ENCODE measurements at regions of chr1 and their contacts with region 1.

Region 1: GRCh38 chr1:24486331-24487065 is 16.1 kb upstream of the RCAN3 start:
- DNase-seq: peak; percentile 8 to 80 (median 55)
- H3K4me3 ChIP-seq: peak overlapping the region; percentile 51
- H3K4me3 Mint-ChIP-seq: peak overlapping the region; percentile 24 to 77 (median 72)
- H3K27ac ChIP-seq: peak overlapping the region; percentile 45
- H3K27ac Mint-ChIP-seq: peak overlapping the region; percentile 58 to 94 (median 80)
- H3K4me1 ChIP-seq: peaks cover 81% of the 10 kb centered on the region
- H3K4me1 Mint-ChIP-seq: peaks cover 50 to 73% (median 65%) of the 10 kb centered on the region in 3 donors
- H3K27me3 ChIP-seq: no peaks in the 10 kb centered on the region
- H3K27me3 Mint-ChIP-seq: peaks cover 0 to 2% of the 10 kb centered on the region in 2 donors

Region 2: DNA sequence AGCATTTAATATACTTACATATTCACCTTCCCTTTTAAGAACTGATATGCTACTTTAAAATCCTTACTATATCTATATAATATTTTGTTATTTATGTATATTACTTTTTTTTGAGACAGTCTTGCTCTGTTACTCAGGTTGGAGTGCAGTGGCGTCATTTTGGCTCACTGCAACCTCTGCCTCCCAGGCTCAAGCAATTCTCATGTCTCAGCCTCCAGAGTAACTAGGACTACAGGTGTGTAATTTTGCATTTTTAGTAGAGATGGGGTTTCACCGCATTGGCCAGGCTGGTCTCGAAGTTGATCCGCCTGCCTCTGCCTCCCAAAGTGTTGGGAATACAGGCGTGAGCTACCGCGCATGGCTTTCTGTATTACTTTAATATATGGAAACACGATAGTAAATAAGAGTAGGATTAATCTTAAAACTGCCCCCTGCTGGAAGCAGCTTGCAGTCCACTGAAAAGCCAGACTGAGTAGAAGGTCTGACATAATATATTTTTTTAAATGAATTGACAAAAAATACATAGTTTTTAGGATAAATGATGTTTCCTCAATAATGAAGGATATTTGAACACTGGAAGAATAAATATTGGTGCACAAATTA is 40.5 kb after region 1 on chr1:
- CTCF ChIA-PET with region 1: interaction called, 20 read pairs
- POLR2A ChIA-PET with region 1: no interaction called
- DNase-seq: peak; percentile 8 to 54 (median 34)
- H3K4me3 ChIP-seq: no peak overlapping the region
- H3K4me3 Mint-ChIP-seq: no peak overlapping the region
- H3K27ac ChIP-seq: no peak overlapping the region
- H3K27ac Mint-ChIP-seq: peak overlapping the region in 6 of 8 donors; percentile 61 to 93 (median 74)
- H3K4me1 ChIP-seq: peaks cover 40% of the 10 kb centered on the region
- H3K4me1 Mint-ChIP-seq: peaks cover 32 to 72% (median 62%) of the 10 kb centered on the region in 3 donors
- H3K27me3 ChIP-seq: no peaks in the 10 kb centered on the region
- H3K27me3 Mint-ChIP-seq: no peaks in the 10 kb centered on the region

Region 3: DNA sequence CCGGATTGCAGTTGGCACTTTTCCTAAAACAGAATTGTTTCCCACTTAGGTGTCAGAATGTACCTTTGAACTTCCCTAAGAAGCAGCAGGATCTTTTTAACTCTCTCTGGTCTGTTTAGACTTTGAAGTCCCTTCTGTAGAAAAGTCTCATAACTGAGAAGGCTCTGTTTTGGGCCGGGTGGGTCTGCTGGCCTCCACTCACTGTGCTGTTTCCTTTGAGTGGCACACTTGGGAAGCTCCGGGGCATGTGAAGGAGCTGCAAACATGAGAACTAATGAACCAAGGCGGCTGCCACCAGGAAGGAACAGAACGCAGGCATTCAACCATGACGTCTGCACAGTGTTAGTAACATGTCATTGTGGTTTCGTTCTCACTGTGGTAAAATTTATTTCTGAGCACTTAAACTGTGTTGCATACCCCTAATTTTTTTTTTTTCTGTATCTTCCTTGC is 49.9 kb after region 1 on chr1:
- CTCF ChIA-PET with region 1: interaction called, 10 read pairs
- POLR2A ChIA-PET with region 1: no interaction called
- DNase-seq: peak; percentile 58 to 89 (median 86)
- H3K4me3 ChIP-seq: peak overlapping the region; percentile 30
- H3K4me3 Mint-ChIP-seq: peak overlapping the region; percentile 81 to 90 (median 84)
- H3K27ac ChIP-seq: peak overlapping the region; percentile 49
- H3K27ac Mint-ChIP-seq: peak overlapping the region; percentile 96 to 100 (median 99)
- H3K4me1 ChIP-seq: peaks cover 33% of the 10 kb centered on the region
- H3K4me1 Mint-ChIP-seq: peaks cover 57 to 81% (median 72%) of the 10 kb centered on the region in 3 donors
- H3K27me3 ChIP-seq: no peaks in the 10 kb centered on the region
- H3K27me3 Mint-ChIP-seq: no peaks in the 10 kb centered on the region

Region 4: DNA sequence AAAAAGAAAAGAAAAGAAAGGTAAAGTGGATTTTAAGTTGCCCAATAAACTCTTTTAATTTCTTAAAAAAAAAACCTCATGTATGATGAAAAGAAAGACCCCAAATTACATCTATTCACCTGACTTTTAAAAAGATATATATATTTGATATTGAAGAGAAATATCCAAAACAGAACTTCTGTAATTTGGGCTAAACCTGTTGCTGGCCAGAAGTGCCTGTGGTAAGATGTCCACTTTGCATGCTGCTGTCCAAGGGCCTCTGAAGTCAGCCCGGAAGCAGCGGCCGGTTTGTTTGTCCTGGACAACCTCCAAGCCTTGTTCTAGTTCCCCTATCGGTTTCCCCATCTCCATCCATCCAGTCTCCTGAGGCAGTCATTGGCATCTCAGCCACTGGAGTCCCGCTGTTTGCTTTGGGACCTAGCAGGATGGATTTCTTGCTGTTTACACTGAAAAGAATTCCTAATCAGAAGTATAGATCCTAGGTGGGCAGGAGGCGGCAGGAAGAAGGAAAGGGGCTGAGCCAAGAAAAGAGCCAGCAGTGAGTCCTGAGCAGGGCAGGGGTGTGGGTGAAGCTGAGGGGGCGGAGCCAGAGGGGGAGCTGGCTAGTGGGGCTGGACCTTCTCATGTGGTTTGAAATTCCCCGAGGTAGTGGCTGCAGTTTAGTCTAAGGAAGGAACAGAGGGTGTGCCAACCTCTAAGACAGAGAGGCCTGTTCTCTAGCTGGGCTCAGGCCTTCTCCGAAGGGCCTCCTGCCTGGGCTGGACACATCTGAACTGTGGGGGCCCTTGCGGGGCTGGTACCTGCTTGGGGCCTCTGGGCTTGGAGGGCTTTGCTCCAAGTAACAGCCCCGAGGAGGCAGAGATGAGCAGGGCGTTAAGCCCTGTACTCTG is 72.6 kb after region 1 on chr1:
- CTCF ChIA-PET with region 1: no interaction called
- POLR2A ChIA-PET with region 1: no interaction called
- DNase-seq: no peak
- H3K4me3 ChIP-seq: no peak overlapping the region
- H3K4me3 Mint-ChIP-seq: no peak overlapping the region
- H3K27ac ChIP-seq: no peak overlapping the region
- H3K27ac Mint-ChIP-seq: no peak overlapping the region
- H3K4me1 ChIP-seq: peaks cover 9% of the 10 kb centered on the region
- H3K4me1 Mint-ChIP-seq: peaks cover 5 to 19% (median 7%) of the 10 kb centered on the region in 3 donors
- H3K27me3 ChIP-seq: peaks cover 7% of the 10 kb centered on the region
- H3K27me3 Mint-ChIP-seq: peaks cover 15 to 32% of the 10 kb centered on the region in 2 donors

Measured in CD8-positive, alpha-beta memory T cell (primary cell).